GM13976 (cell line): ENCODE measurements at regions of chr9 and their contacts with region 1.

Region 1: DNA sequence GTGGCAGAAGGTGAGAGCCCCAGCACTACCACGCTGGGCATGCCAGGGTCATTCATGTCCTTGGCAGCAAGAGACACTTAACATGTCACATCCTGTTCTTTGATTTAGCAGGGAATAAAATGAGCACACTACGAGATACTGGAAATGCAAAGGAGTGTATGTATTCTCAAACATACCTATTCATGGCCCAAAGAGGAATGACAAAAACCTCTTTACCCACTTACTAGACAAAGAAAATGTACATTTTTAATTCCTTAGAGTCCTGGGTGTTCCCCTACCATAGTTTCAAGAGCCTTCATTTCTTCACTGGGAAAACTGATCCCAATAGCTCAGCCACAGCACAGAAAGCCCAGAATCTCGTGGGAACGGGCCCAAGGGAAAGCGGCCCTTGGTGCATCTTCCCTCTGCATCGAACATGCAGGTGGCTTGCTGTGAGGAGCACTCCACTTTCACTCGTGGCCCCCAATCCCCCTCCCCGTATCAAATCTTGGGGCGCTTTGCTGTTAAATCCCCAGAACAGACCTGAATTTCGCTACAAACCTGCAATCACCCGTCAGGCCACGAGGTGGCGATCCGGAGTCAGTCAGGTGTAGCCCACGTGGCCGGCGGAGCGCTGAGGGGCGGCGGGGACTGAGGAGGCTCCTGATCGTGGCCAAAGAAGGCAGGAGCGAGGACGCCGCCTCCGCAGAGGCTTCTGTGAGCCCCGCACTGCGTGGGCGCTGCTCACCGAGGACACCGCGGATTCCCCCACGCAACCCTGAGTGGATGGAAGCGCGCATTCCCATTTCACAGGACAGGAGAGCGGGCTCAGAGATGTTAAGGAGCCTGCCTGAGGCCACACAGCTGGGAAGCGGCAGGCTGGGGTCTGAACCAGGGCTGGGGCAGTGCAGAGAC is 91.4 kb downstream of the LMX1B start:
- DNase-seq: peak; percentile 93
- CTCF ChIP-seq: peak; percentile 93

Region 2: GRCh38 chr9:126781186-126782052 is 76.3 kb after region 1 on chr9:
- in situ Hi-C with region 1: loop called (anchors 5 kb)
- DNase-seq: peak; percentile 86
- CTCF ChIP-seq: peak; percentile 97